A673 (cell line): ENCODE measurements at regions of chr10 and their contacts with region 1.

Region 1: GRCh38 chr10:131096001-131096400 is 215.5 kb downstream of the TCERG1L start:
- DNase-seq: no peak
- H3K4me3 ChIP-seq: no peak overlapping the region
- H3K27ac ChIP-seq: no peak overlapping the region
- H3K4me1 ChIP-seq: peaks cover 6% of the 10 kb centered on the region
- H3K27me3 ChIP-seq: no peaks in the 10 kb centered on the region
- CTCF ChIP-seq: no peak

Region 2: DNA sequence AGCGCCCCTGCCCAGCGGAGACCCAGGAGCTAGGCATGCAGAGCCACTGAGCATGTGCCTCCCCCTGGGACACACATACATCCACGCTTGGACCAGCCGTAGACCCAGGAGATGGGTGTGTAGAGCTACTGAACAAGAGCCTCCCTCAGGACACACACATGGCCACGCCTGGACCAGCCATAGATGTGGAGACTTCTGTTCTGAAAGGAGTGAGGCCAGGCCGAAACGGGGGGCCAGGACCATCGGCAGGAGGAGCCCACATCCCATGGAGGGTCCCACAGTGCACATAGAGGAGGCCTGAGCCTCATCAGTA is 124.9 kb before region 1 on chr10:
- CTCF ChIA-PET with region 1: no interaction called
- POLR2A ChIA-PET with region 1: interaction called, 14 read pairs
- intact Hi-C with region 1: no loop called
- DNase-seq: no peak
- H3K4me3 ChIP-seq: no peak overlapping the region
- H3K27ac ChIP-seq: no peak overlapping the region
- H3K4me1 ChIP-seq: no peaks in the 10 kb centered on the region
- H3K27me3 ChIP-seq: no peaks in the 10 kb centered on the region
- CTCF ChIP-seq: no peak